Cardiac septum (tissue), 1 donor: ENCODE measurements at regions of chr3 and their contacts with region 1.

Region 1: GRCh38 chr3:53739966-53740365 is 106.3 kb downstream of the CHDH start:
- DNase-seq: no peak

Region 2: GRCh38 chr3:53518495-53518981 is 221.4 kb before region 1 on chr3:
- intact Hi-C with region 1: no loop called
- DNase-seq: no peak

Region 3: GRCh38 chr3:53804821-53805788 is 65.1 kb after region 1 on chr3:
- intact Hi-C with region 1: loop called (anchors 5 kb)
- DNase-seq: peak; percentile 26